Panc1 (cell line): ENCODE measurements at regions of chr5 and their contacts with region 1.

Region 1: DNA sequence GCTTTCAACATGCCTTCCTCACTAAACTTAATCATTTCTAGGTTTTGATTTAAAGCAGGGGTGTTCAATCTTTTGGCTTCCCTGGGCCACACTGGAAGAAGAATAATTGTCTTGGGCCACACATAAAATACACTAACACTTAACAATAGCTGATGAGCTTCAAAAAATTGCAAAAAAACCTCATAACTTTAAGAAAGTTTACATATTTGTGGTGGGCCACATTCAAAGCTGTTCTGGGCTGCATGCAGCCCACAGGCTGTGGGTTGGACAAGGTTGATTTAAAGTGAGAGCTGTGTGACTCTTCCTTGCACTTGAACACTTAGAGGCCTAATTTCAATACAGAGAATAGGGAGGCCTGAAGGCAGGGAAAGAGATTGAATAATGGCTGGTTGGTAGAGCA is 598.3 kb downstream of the EFNA5 start:
- DNase-seq: no peak
- ATAC-seq: no peak
- H3K4me3 ChIP-seq: no peak overlapping the region
- H3K27ac ChIP-seq: no peak overlapping the region
- H3K4me1 ChIP-seq: no peaks in the 10 kb centered on the region
- H3K27me3 ChIP-seq: no peaks in the 10 kb centered on the region
- CTCF ChIP-seq: no peak

Region 2: DNA sequence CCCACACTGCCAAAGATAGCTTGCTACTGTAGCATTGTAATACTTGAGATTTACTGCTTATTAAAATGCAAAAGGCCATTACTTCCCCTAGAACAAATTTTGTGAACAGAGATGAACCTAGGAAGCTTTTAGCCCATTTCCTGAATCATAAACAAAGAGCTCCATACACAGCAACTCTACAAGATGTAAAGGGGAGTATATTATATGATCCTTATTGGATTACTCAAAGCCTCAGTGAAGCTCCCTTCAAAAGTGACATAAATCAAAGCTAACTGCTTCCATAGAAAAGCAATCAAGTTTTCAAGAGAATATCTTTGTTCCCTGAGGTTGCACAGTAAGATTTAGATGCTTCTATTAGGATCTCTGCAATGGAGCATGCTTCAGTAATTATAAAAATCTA is 31.5 kb before region 1 on chr5:
- CTCF ChIA-PET with region 1: no interaction called
- POLR2A ChIA-PET with region 1: no interaction called
- in situ Hi-C with region 1: no loop called
- intact Hi-C with region 1: no loop called
- DNase-seq: no peak
- ATAC-seq: no peak
- H3K4me3 ChIP-seq: no peak overlapping the region
- H3K27ac ChIP-seq: no peak overlapping the region
- H3K4me1 ChIP-seq: no peaks in the 10 kb centered on the region
- H3K27me3 ChIP-seq: no peaks in the 10 kb centered on the region
- CTCF ChIP-seq: no peak

Region 3: GRCh38 chr5:107058239-107058638 is 14.2 kb before region 1 on chr5:
- CTCF ChIA-PET with region 1: no interaction called
- POLR2A ChIA-PET with region 1: no interaction called
- in situ Hi-C with region 1: no loop called
- intact Hi-C with region 1: loop called (anchors 1 kb)
- DNase-seq: no peak
- ATAC-seq: no peak
- H3K4me3 ChIP-seq: no peak overlapping the region
- H3K27ac ChIP-seq: no peak overlapping the region
- H3K4me1 ChIP-seq: no peaks in the 10 kb centered on the region
- H3K27me3 ChIP-seq: no peaks in the 10 kb centered on the region
- CTCF ChIP-seq: no peak

Region 4: DNA sequence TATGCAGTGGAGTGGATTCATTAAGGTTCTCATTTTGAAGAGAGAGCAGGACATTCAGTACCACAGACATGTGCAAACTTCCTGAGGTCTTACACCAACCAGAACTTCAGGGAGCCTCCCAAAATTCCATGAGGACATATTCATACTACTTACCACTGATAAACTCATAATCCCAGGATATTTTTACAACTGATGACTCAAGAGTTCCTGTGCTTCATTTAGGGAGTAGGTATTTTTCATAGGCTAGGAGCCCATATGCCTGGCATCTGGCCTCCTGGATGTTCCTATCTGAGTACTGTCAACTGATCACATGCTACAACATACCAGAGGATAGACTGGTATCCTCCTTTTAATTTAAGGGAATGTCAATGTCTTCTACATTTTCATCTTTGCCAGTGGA is 20.3 kb after region 1 on chr5:
- CTCF ChIA-PET with region 1: no interaction called
- POLR2A ChIA-PET with region 1: no interaction called
- in situ Hi-C with region 1: no loop called
- intact Hi-C with region 1: no loop called
- DNase-seq: no peak
- ATAC-seq: no peak
- H3K4me3 ChIP-seq: no peak overlapping the region
- H3K27ac ChIP-seq: no peak overlapping the region
- H3K4me1 ChIP-seq: no peaks in the 10 kb centered on the region
- H3K27me3 ChIP-seq: no peaks in the 10 kb centered on the region
- CTCF ChIP-seq: no peak